Activated CD4-positive, alpha-beta memory T cell treated with anti-CD3 and anti-CD28 coated beads for 36 hours (primary cell): ENCODE measurements at regions of chr16 and their contacts with region 1.

Region 1: GRCh38 chr16:55944377-55944802 is 69.2 kb upstream of the CES5A start:
- DNase-seq: peak; percentile 62
- H3K4me3 Mint-ChIP-seq: no peak overlapping the region
- H3K27ac Mint-ChIP-seq: no peak overlapping the region
- H3K4me1 Mint-ChIP-seq: no peaks in the 10 kb centered on the region
- H3K27me3 Mint-ChIP-seq: peaks cover 43% of the 10 kb centered on the region

Region 2: GRCh38 chr16:55925242-55925641 is 19.1 kb before region 1 on chr16:
- CTCF ChIA-PET with region 1: no interaction called
- POLR2A ChIA-PET with region 1: no interaction called
- intact Hi-C with region 1: no loop called
- DNase-seq: no peak
- H3K4me3 Mint-ChIP-seq: no peak overlapping the region
- H3K27ac Mint-ChIP-seq: no peak overlapping the region
- H3K4me1 Mint-ChIP-seq: no peaks in the 10 kb centered on the region
- H3K27me3 Mint-ChIP-seq: peaks cover 28% of the 10 kb centered on the region

Region 3: GRCh38 chr16:55955845-55956244 is 11.5 kb after region 1 on chr16:
- CTCF ChIA-PET with region 1: interaction called, 15 read pairs
- POLR2A ChIA-PET with region 1: no interaction called
- intact Hi-C with region 1: no loop called
- DNase-seq: no peak
- H3K4me3 Mint-ChIP-seq: no peak overlapping the region
- H3K27ac Mint-ChIP-seq: no peak overlapping the region
- H3K4me1 Mint-ChIP-seq: no peaks in the 10 kb centered on the region
- H3K27me3 Mint-ChIP-seq: peaks cover 5% of the 10 kb centered on the region

Region 4: GRCh38 chr16:55968221-55968620 is 23.8 kb after region 1 on chr16:
- CTCF ChIA-PET with region 1: no interaction called
- POLR2A ChIA-PET with region 1: no interaction called
- intact Hi-C with region 1: no loop called
- DNase-seq: no peak
- H3K4me3 Mint-ChIP-seq: no peak overlapping the region
- H3K27ac Mint-ChIP-seq: no peak overlapping the region
- H3K4me1 Mint-ChIP-seq: no peaks in the 10 kb centered on the region
- H3K27me3 Mint-ChIP-seq: peaks cover 4% of the 10 kb centered on the region